ENCODE measurements at regions of chr3 and their contacts with region 1.

Region 1: DNA sequence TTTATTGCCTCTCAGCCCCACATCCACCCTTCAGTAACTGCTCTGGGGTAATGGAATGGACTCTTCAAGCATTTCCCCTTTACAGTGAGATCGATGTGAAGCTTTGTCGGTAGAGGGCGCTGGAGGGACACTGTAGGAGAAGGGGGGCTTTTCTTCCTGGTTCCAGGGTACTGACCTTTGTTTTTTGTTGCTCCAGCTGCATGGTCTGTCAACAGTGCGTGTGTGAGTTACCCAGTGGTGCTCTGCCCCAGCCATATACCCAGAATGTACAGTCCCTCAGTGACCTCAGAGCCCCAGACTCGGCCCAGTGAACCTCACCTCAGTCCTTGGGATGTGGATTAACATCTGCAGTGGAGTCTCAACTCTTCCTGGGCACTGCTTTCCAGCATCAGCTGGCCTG is 180.3 kb upstream of the TSC22D2 start:
- DNase-seq: peak; percentile 74 to 85 (median 78)
- H3K4me3 ChIP-seq: no peak overlapping the region
- H3K27ac ChIP-seq: no peak overlapping the region
- H3K4me1 ChIP-seq: peaks cover 0 to 1% (median 0%) of the 10 kb centered on the region in 4 experiments
- H3K27me3 ChIP-seq: peaks cover 0 to 13% (median 2%) of the 10 kb centered on the region in 5 experiments

Region 2: DNA sequence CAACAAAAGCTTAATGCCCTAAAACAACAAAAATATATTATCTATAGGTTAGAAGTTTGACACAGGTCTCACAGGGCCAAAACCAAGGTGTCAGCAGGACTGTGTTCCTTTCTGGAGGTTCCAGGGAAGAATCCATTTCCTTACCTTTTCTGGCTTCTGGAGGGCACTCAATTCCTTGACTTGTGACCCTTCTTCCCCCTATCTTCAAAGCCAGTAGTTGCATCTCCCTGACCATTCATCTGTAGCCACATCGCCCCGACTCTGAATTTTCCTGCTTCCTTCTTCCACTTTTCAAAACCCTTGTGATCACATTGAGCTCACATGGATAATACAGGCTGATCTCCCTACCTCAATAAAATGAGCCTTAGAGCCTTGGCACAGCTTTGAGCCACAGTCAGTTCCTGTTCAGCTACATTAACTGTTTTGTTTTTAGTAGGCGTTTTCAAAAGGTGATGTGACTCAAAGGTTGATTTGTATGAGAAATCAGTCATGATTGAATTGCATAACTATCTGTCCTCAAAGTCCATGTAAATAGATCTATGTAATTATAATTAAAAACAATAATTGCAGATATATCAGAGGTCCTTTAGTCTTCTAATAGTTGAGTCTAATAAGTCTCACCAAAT is 269.6 kb before region 1 on chr3:
- CTCF ChIA-PET with region 1: no interaction called
- POLR2A ChIA-PET with region 1: no interaction called
- DNase-seq: no peak
- H3K4me3 ChIP-seq: no peak overlapping the region
- H3K27ac ChIP-seq: no peak overlapping the region
- H3K4me1 ChIP-seq: peaks cover 0 to 10% (median 5%) of the 10 kb centered on the region in 4 experiments
- H3K27me3 ChIP-seq: no peaks in the 10 kb centered on the region

Region 3: DNA sequence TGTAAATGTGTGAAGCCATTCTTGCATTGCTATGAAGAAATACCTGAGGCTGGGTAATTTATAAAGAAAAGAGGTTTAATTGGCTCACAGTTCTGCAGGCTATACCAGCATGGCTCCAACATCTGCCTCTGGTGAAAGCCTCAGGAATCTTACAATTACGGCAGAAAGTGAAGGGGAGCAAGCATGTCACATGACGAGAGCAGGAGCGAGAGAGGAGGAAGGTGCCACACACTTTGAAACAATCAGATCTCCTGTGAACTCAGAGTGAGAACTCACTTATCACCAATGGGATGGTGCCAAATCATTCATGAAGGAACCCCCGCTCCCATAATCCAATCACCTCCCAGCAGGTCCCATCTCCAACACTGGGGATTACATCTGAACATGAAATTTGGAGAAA is 33.3 kb before region 1 on chr3:
- CTCF ChIA-PET with region 1: no interaction called
- POLR2A ChIA-PET with region 1: no interaction called
- DNase-seq: no peak
- H3K4me3 ChIP-seq: no peak overlapping the region
- H3K27ac ChIP-seq: no peak overlapping the region
- H3K4me1 ChIP-seq: no peaks in the 10 kb centered on the region
- H3K27me3 ChIP-seq: no peaks in the 10 kb centered on the region

Region 4: GRCh38 chr3:150259526-150260397 is 31.9 kb after region 1 on chr3:
- CTCF ChIA-PET with region 1: no interaction called
- POLR2A ChIA-PET with region 1: no interaction called
- DNase-seq: no peak
- H3K4me3 ChIP-seq: no peak overlapping the region
- H3K27ac ChIP-seq: no peak overlapping the region
- H3K4me1 ChIP-seq: no peaks in the 10 kb centered on the region
- H3K27me3 ChIP-seq: no peaks in the 10 kb centered on the region

Region 5: DNA sequence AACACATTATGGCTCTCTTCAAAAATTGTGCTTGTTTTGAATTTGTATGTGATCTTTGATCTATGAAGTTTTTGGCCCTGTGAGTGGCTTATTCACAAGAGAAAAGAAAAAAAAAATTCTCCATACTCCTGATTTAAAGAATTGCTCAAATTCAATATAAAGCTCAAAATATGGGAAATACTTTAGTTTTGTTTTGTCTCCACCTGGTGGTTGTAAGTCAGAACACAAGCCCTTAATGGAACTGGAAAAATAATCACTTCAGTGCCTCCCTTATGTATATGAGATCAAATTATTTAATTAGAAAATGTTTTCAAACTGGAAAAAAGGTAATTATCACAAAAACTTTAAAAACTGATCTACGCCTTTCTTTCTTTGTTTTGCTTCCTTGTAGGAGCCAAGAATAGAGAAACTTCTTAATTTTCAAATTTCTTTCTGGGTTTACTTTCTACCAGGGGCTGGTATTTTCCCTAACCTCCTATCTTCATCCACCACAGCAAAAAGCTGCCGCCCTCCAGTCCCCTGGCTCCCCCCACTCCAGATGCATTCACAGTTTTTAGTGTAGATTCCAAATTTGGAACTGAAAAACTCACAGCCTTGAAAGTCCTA is 267.8 kb after region 1 on chr3:
- CTCF ChIA-PET with region 1: interaction called, 51 read pairs
- POLR2A ChIA-PET with region 1: no interaction called
- DNase-seq: peak; percentile 57 to 70 (median 61)
- H3K4me3 ChIP-seq: no peak overlapping the region
- H3K27ac ChIP-seq: no peak overlapping the region
- H3K4me1 ChIP-seq: no peaks in the 10 kb centered on the region
- H3K27me3 ChIP-seq: no peaks in the 10 kb centered on the region

Region 6: GRCh38 chr3:150555859-150556436 is 328.1 kb after region 1 on chr3:
- CTCF ChIA-PET with region 1: no interaction called
- POLR2A ChIA-PET with region 1: no interaction called
- DNase-seq: no peak
- H3K4me3 ChIP-seq: no peak overlapping the region
- H3K27ac ChIP-seq: peak overlapping the region in 1 of 2 experiments; percentile 2
- H3K4me1 ChIP-seq: no peaks in the 10 kb centered on the region
- H3K27me3 ChIP-seq: no peaks in the 10 kb centered on the region